Posterior vena cava (tissue), 2 donors: ENCODE measurements at regions of chr10 and their contacts with region 1.

Region 1: DNA sequence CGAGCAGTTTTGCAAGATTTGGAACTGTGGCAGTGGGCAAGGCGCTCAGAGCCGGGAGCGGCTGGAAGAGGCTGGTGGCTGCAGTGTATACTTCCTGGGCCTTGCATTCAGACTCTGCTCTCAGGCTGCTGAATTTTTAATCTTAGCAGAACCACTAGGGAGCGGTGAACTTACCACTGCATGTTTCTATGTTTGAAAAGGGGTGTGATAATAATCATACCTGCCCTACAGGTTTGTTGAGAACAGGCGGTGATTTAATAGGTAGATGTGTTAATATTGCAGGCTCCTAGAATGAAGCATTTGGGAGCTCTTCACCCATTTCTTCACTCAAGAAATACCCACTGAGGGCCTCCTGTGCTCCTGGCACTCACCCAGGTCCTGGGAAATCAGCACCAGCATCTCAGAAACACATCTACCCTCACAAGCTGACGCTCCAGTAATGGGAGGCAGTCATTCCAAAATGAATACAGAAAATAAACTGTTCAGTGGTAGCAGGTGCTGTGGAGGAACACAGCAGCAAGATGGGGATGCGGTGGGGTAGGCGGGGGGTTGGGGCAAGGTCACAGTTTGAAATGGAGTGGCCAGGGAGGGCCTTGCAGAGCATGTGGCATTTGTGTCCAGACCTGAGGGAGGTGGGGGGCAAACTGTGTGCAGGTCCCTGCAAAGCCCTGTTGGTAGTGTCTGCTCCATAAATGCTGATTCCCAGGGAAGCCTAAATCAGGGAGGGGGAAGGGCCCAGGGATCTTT is 41.0 kb downstream of the VWA2 start:
- DNase-seq: peak; percentile 29

Region 2: GRCh38 chr10:114245121-114245791 is 34.8 kb before region 1 on chr10:
- intact Hi-C with region 1: loop called in 1 of 2 experiments (anchors 2 kb)
- DNase-seq: no peak

Region 3: DNA sequence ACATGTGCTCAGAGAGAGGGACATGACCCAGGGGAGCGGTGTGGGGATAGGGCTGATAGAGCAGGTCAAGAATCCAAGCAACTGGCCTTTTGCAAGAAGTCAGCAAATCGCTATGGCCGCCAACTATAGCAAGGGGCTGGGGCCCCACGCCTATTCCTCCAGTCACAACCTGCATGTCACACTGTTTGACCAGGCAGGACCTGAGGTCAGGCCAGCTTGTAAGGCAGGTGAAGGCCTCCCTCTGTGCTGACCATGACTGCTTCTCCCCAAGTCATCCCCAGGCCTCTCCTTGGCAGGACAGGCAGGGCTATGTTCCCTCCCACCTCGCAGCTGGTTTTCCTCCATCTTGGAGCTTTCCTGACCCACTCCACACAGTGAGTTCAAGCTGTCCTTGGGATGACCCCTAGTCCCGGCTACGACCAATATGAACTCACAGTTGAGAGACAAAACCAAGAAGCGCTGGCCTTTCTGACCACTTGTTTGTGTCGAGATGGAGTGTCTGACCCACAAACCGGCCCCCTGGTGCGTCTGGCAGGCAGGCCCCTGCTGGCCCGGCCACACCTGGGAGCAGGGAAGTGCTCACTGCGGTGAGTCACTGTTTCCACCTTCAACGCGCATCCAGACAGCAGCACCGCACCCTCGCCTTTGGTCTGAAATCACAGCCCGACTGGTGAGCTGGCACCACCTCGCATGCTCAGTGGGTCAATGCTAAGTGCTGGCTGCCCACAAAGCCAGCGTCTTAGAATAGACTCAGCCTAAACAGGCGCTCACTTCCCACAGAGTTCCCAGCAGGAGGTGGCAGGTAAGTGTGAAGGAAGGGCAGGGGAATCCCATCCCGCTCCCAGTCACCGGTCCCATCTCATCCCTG is 40.4 kb after region 1 on chr10:
- intact Hi-C with region 1: no loop called
- DNase-seq: no peak

Region 4: DNA sequence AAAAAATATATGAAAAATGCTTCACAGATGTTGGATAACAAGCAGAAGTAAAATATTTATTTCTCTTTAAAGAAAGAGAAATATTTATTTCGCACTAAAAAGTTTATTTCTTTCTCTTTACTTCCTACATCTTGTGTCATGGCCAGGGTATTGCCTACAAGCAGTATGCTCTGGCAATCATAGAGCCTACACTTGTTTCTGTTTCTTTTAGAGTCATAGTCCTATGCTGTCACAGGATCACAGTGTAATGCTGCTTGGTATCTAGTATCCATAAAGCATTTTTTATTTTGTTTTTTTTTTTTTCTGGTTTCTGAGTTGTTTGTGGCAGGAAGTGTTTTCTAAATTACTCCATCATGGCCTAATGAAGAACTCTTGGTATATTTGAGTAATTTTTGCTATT is 929.1 kb after region 1 on chr10:
- intact Hi-C with region 1: no loop called
- DNase-seq: no peak